ENCODE measurements at regions of chr14 and their contacts with region 1.

Region 1: DNA sequence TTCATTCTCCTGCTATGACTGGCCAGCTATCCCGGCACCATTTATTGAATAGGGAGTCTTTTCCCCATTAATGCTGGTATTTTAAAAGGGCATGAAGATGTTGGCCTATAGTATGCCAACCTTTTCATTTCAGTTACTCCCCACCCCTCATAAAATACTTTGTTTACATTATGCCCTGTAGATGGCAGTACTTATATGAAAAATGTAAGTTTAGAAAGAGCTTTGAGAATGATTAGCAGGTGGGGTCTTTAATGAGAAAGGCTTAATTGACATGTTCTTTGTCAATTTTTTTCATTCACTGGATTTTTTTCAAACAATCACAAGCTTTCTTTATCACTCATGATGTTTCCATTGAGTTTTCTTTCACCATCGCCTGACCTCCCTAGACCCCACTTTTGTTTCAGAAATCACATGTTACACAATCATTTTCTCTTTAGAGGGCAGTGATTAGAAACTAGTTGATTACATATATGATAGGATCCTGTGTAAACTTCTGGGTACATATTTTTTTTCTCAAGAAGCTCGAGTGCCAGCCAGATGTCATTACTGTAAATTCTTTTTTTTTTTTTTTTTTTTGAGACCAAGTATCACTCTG is 62.6 kb upstream of the PSMA6 start:
- DNase-seq: no peak
- H3K4me3 ChIP-seq: no peak overlapping the region
- CTCF ChIP-seq: no peak

Region 2: DNA sequence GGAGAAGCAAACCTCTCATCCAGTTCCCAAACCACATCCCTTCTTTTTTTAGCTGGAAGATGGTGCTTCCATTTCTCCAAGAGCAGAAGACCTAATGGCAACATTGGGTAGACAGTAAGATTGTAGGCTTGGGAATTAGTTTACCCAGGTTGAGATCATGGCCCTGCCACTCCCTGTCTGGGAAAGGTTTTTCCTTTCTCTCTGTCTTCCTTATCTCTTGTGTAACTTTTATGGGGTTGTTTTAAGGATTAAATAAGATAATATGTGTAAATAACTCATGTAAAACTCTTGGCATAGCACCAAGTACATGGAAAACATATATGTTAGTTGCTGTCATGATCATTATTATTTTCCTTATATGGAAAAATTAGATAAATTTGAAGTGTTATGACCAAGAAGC is 39.4 kb after region 1 on chr14:
- in situ Hi-C with region 1: loop called (anchors 5 kb)
- DNase-seq: no peak
- H3K4me3 ChIP-seq: no peak overlapping the region
- CTCF ChIP-seq: no peak

Region 3: DNA sequence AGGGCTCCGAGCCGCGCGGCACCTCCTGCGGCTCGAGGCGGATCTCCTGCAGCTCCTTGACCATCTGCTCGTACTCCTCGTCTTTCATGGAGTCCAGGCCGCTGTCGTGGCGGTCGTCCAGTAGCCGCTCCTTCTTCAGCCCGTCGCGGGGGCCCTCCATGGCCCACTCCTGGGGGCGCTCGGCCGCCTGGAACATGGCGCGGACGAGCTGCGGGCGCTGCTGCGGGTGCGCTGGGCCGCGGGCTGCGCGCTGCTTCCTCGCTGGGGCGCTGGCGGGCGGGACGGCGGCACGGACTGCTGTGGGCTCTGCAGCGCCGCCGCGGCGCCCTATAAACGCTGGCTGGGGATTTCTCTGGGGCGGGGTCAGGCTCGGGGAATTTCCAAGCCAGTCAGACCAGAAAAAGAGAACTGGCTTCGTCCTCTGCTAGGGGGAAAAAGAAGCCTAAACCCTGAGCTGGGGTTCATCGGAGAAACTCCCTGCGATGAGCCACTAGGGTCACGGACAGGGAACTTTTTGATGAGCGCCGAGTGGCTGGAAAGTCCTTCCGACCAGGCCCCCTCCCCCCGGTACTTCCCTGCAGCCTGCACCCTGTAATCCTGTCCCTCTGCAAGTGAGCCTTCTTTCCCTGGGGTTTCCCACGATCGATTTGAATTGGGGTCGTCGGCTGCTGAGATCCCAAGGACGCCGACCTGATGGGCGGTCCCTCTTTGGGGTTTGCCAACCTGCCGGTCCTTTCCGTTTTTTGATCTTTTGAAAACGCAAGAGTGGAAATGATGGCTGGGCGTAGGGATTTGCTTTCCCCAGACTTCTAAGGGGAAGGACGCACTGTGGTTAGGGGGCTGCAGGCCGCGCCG is 175.1 kb after region 1 on chr14 and contains the start of gene NFKBIA:
- in situ Hi-C with region 1: loop called (anchors 25 kb)
- DNase-seq: no peak
- H3K4me3 ChIP-seq: peak within 1 kb of the TSS; percentile 70
- CTCF ChIP-seq: peak; percentile 25